ENCODE measurements at regions of chr1 and their contacts with region 1.

Region 1: GRCh38 chr1:230167419-230167852 is 100.4 kb downstream of the GALNT2 start:
- DNase-seq: no peak
- H3K4me3 ChIP-seq: no peak overlapping the region
- H3K27ac ChIP-seq: no peak overlapping the region
- H3K4me1 ChIP-seq: peaks cover 0 to 42% (median 23%) of the 10 kb centered on the region in 6 donors
- H3K27me3 ChIP-seq: no peaks in the 10 kb centered on the region
- CTCF ChIP-seq: peak; percentile 57 to 91 (median 85)
- POLR2A ChIP-seq: no peak

Region 2: DNA sequence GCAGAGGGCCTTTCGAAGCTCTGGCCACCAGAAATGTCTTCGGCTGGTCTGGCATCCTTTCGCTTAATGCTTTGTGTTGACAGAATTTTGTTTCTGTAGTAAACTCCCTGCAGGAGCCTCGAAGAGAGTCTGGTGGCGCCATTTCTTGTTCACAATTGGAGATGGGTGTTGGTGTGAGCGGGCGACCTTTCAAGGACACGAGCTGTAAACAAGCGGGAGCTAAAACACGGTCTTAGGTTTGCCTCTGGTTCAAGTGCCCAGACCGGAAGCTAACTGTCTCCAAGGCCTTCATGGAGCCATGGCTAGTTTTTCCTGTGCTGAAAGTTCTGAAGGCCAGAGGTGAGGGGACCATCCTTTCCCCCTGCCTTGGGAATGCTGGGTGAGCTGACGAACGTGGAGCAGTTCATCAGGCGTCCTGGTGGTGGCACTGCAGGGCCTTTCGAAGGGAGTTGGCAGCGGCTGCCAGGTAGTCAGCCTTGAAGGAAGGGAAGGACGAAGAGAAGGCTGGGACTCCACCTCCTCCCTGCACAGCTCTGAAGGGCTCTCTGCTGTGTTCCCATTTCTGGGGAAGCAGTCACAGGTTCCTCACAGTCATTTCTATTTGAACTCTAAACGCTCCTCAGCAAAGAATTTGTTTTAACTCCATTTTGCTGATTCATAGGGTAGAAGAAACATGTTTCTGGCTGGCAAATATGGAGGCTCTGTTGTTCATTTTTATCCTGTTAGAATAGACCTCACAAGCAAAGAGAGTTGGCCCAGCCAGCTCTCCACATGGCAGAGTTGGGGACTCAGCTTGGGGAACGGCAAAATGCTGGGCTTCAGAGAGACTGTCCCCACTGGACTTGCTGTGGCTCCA is 506.2 kb before region 1 on chr1:
- intact Hi-C with region 1: loop called (anchors 10 kb)
- DNase-seq: peak; percentile 93
- H3K4me3 ChIP-seq: no peak overlapping the region
- H3K27ac ChIP-seq: no peak overlapping the region
- H3K4me1 ChIP-seq: peaks cover 9 to 28% (median 20%) of the 10 kb centered on the region in 6 donors
- H3K27me3 ChIP-seq: no peaks in the 10 kb centered on the region
- CTCF ChIP-seq: peak; percentile 77 to 91 (median 86)
- POLR2A ChIP-seq: no peak

Region 3: GRCh38 chr1:230382060-230382491 is 214.6 kb after region 1 on chr1:
- intact Hi-C with region 1: no loop called
- DNase-seq: no peak
- H3K4me3 ChIP-seq: no peak overlapping the region
- H3K27ac ChIP-seq: no peak overlapping the region
- H3K4me1 ChIP-seq: no peaks in the 10 kb centered on the region
- H3K27me3 ChIP-seq: peaks cover 0 to 9% (median 0%) of the 10 kb centered on the region in 7 donors
- CTCF ChIP-seq: no peak
- POLR2A ChIP-seq: no peak

Region 4: DNA sequence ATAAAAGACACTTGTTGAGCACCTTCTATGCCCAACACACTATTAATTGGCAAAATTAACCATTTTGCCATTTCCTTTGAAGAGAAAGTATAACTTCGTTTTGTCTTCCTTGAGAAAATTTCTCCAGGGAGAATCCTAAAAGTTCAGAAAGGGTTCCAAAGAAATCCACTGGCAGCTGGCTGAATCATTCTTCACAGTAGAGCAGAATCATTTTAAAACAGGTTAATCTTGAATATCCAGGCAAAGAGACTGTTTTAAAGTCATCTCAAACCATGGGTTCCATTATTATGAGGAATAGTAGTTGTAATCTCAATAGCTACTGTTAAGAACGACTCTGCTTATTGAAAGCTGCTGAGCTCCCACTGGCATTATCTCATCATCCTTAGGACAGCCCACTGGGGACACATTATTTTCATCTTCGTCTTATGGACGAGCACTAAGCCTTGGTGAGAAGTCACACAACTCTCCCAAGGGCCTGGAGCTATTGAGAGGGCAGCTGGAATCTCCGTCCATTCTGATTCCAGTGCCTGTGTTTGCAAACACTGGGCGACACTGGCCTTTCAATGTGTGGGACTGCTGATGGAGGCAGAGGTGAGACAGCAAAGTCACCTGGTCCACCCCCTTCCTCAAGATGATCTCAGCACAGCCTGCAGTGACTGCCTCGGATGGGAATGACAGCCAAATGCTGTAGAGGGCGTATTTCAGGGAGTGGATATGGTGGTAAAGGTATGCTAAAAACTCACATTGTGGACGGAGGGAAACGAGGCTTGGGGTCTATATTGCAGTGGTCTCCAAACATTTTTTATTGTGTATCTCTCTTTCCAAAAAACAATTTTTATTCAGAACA is 274.0 kb after region 1 on chr1:
- intact Hi-C with region 1: no loop called
- DNase-seq: no peak
- H3K4me3 ChIP-seq: no peak overlapping the region
- H3K27ac ChIP-seq: no peak overlapping the region
- H3K4me1 ChIP-seq: no peaks in the 10 kb centered on the region
- H3K27me3 ChIP-seq: peaks cover 0 to 36% (median 0%) of the 10 kb centered on the region in 7 donors
- CTCF ChIP-seq: no peak
- POLR2A ChIP-seq: no peak